Endothelial cell of umbilical vein (primary cell): ENCODE measurements at regions of chr19 and their contacts with region 1.

Region 1: GRCh38 chr19:14432791-14433553 is at the start of gene PKN1:
- DNase-seq: peak; percentile 21
- H3K4me3 ChIP-seq: peak within 1 kb of the TSS; percentile 43 to 84 (median 79)
- H3K27ac ChIP-seq: peak within 1 kb of the TSS; percentile 78
- H3K4me1 ChIP-seq: peaks cover 27% of the 10 kb centered on the region
- H3K27me3 ChIP-seq: peaks cover 0 to 2% of the 10 kb centered on the region in 2 experiments
- CTCF ChIP-seq: no peak
- POLR2A ChIP-seq: peak; percentile 18
- total RNA-seq, gene PKN1: 302 and 326 TPM in 2 replicates

Region 2: DNA sequence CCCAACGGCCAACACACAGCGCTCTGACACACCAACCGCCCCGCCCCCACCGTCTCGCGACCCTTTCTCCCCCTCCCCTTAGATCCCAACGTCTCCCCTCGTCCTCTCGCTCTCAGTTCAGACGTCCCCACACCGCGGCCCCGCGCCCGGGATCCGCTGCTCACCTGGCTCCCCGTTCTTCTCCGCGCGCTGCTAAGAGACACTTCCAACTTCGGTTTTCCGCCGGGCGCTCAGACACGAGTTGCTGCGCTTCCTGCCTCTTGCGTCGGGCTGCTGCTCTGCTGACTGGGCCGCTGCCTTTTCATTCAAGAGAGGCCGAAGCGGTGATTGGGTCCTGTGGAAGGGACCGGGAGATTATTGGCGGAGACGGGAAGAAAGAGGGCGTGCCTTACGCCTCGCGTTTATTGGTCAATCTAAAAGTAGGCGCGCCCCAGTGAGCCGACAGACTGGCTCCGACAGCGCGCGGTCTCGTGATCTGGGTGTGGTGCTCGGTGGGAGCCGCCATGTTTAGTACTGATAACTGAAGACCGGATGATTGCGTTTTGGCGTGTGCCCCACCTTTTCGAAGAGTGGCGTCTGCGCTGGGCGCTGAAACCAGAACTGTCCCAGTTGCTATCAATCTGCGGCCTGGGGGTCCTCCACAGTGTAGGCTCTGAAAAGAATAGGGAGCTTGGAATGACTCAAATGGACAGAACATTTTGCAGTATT is 13.7 kb before region 1 on chr19 and contains the start of gene DDX39A:
- CTCF ChIA-PET with region 1: interaction called, 8 read pairs
- POLR2A ChIA-PET with region 1: no interaction called
- dilution Hi-C with region 1: no loop called
- intact Hi-C with region 1: loop called (anchors 1 kb)
- DNase-seq: peak; percentile 99
- H3K4me3 ChIP-seq: peak within 1 kb of the TSS; percentile 78 to 98 (median 82)
- H3K27ac ChIP-seq: peak within 1 kb of the TSS; percentile 87
- H3K4me1 ChIP-seq: peaks cover 12% of the 10 kb centered on the region
- H3K27me3 ChIP-seq: no peaks in the 10 kb centered on the region
- CTCF ChIP-seq: no peak
- POLR2A ChIP-seq: peak; percentile 86
- total RNA-seq, gene DDX39A: 153 and 157 TPM in 2 replicates

Region 3: GRCh38 chr19:14603990-14604387 is 171.0 kb after region 1 on chr19:
- CTCF ChIA-PET with region 1: no interaction called
- POLR2A ChIA-PET with region 1: no interaction called
- dilution Hi-C with region 1: no loop called
- intact Hi-C with region 1: no loop called
- DNase-seq: no peak
- H3K4me3 ChIP-seq: no peak overlapping the region
- H3K27ac ChIP-seq: no peak overlapping the region
- H3K4me1 ChIP-seq: no peaks in the 10 kb centered on the region
- H3K27me3 ChIP-seq: no peaks in the 10 kb centered on the region
- CTCF ChIP-seq: no peak
- POLR2A ChIP-seq: no peak